RWPE1 (cell line): ENCODE measurements at regions of chr2 and their contacts with region 1.

Region 1: DNA sequence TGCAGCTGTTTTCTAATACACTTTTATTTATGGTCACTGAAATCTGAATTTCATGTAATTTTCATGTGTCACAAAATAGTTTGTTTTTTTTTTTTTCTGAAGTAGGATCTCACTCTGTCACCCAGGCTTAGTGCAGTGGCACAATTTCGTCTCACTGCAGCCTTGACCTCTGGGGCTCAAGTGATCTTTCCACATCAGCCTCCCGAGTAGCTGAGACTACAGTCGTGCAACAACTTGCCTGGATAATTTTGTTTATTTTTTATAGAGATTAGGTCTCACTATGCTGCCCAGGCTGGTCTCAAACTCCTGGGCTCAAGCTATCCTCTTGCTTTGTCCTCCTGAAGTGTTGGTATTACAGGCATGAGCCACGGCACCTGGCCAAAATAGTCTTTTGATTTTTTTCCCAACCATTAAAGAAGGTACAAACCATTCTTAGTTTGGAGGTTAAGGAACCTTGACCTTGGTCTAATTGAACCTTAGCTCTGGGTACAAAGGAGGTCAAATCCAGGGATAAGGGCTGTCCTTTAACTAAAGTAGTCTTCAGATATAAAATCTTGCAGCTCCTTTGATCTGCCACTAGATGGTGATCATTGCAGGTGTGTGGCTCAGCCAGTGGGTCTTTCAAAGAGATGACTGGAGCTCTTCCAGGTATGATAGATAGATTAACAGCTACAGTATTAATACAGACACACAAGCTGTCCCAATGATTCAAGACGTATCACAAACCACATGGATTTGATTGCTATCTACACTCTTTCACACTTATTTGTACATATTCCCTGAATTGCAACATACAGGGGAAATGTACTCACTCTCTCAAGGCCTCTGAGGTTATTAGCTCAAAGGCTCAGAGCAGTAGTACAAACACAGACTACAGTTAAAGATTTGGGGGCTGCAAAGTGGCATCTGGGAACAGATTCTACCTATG is 4.7 kb upstream of the KRCC1 start:
- DNase-seq: peak; percentile 71
- H3K27ac ChIP-seq: no peak overlapping the region
- CTCF ChIP-seq: peak; percentile 83

Region 2: DNA sequence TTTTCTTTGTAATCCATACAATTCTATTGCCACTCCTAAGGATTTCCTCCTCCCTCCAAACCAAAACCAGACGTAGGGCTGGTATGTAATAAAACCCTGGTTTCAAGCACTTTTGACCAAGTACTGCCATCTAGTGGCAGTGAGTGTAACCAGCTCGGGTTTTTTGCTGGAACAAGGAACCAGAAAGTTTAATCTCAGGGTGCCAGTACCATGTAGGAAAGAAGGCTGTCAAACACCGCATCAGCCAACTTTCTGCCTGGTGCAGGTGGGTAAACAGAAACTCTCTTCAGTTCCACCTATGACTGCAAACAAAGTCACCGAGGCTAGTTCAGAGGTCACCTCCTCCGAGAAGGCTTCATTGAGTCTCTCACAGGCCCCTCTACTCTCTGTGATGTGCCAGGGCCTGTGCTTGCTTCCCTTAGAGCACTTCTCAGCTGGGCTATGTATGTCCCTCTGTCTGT is 99.7 kb after region 1 on chr2:
- CTCF ChIA-PET with region 1: interaction called, 45 read pairs
- POLR2A ChIA-PET with region 1: no interaction called
- DNase-seq: peak; percentile 64
- H3K27ac ChIP-seq: no peak overlapping the region
- CTCF ChIP-seq: peak; percentile 80

Region 3: GRCh38 chr2:88170472-88170892 is 110.2 kb after region 1 on chr2:
- CTCF ChIA-PET with region 1: interaction called, 11 read pairs
- POLR2A ChIA-PET with region 1: no interaction called
- DNase-seq: no peak
- H3K27ac ChIP-seq: no peak overlapping the region
- CTCF ChIP-seq: no peak